ENCODE measurements at regions of chr14 and their contacts with region 1.

Region 1: GRCh38 chr14:73824116-73824515 is 27.5 kb upstream of the PTGR2 start:
- DNase-seq: no peak
- H3K4me3 ChIP-seq: no peak overlapping the region
- CTCF ChIP-seq: no peak

Region 2: DNA sequence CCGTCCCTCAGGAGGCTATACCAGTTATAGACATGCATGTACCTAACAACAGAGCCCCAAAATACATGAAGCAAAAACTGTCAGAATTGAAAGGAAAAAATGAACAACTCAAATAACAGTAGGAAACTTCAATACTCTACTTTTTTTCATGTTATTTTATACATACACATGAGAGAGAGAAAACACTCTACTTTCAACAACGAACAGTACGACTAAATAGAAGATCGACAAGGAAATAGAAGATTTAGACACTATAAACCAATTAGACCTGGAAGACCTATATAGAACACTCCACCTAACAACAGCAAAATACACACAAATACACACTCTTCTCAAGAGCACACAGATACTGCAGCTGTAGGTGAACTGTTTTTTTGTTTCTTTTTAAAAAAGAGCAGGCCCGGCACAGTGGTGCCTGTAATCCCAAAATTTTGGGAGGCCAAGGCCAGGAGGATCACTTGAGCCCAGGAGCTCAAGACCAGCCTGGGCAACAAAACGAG is 75.2 kb before region 1 on chr14:
- in situ Hi-C with region 1: no loop called
- DNase-seq: no peak
- H3K4me3 ChIP-seq: no peak overlapping the region
- CTCF ChIP-seq: no peak

Region 3: DNA sequence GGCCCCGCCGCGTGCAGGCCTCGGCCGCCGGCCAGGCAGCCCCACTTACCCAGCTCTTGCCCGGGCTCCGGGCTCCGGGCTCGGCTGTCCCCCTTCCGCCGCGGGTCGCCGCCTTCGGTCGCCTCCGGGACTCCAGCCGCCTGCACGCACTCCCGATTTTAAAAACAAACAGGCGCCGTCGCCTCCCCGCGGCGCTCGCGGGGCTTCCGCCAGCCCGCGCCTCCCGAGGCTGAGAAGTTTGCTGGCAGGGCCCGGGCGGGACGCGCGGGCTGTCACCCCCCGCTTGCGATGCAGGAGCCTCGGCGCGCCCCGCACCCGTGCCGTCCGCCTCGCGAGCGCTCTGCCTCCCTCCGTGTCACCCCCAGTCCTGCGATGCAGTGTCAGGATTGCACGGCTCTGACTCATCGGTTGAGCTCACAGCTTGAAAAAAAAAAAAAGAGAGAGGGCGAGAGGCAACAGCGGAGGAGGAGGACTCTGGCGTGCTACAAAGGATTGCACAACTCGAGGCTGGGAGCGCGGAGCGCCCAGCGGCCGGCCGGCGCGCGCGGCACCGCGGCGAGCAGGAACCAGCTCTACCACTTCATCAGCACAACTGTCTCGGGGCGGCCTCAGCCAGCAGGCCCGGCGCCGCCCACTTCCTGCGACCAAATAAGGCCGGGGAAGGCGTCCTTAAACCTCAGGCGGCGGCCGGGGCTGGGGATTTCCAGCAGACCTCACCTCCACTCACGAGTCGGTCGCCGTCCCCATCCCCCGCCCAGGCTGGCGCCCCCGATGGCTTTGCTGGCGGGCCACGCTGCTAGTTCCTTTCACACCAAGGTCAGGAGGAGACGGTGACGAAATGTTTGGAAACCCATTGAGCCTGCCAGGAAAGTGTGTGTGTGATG is 64.2 kb before region 1 on chr14:
- in situ Hi-C with region 1: loop called (anchors 5 kb)
- DNase-seq: peak; percentile 95
- H3K4me3 ChIP-seq: peak overlapping the region; percentile 70
- CTCF ChIP-seq: no peak

Region 4: DNA sequence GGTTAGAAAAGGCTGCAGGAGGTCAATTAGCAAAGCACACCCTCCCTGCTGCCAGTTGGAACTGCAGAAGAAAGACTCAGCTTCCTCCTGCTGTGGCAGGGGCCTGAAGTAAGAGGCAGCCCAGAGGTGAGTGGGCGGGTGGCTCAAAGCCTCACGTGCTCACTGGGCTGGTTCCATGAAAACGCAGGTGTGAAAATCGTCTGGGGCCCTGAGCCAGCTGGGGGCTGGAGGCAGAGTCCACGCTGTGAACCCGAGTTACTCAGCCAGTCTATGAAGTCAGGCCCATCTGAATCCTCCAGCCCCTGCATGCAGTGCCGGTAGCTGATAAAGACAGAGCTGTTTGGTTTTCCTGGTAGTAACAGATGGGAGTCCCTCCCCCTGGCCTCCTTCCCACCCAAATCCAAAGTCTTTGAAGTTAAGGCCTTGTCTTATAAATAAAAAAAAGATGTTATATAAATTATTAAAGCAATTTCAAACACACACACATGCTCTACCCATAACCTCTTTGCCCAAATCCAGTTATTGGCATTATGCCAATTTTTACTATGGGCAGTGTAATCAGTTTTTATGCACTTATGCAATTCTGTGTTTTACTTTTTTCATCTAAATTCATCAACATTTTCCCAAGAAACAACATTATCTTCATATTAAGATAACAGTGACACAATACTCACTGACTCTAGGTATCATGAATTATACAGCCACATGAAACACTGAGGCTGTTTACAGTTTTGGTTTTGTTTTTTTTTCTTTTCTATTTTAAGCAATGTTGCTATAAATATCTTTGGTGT is 52.1 kb before region 1 on chr14:
- in situ Hi-C with region 1: no loop called
- DNase-seq: no peak
- H3K4me3 ChIP-seq: no peak overlapping the region
- CTCF ChIP-seq: no peak

Region 5: DNA sequence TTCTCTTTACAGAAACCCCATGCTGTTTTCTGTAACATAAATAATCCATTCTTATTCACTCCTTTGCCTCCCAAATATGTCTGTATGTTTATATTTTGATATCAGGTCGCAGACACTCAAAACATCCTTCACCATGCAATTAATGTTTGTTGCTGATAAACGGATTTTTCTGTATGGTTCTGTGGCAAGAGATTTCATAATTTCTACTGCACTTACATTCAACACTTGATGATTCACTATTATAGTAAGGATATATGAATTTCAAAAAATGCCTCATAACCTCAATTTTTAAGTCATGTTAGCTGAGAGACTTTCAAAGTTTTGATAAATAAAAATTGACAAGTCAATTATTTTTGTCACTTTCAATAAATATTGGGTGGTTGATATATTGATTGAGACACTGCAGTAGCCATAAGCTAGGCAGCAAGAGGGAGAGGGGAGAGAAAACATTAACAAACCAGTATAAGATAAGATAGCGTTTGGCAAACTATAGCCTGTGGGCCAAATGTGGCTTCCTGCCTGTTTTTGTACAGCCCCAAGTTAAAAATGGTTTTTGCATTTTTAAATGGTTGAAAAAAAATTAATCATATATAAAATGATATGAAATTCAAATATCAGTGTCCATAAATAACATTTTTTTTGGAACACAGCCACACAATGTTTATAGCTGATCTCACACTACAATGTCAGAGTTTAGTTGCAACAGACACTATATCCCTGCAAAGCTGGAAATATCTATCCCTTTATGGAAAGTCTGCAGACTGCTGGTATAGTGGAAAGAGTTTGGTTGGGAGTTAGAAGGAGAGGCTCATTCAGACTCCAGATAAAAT is 241.8 kb after region 1 on chr14:
- in situ Hi-C with region 1: no loop called
- DNase-seq: no peak
- H3K4me3 ChIP-seq: no peak overlapping the region
- CTCF ChIP-seq: no peak

Region 6: DNA sequence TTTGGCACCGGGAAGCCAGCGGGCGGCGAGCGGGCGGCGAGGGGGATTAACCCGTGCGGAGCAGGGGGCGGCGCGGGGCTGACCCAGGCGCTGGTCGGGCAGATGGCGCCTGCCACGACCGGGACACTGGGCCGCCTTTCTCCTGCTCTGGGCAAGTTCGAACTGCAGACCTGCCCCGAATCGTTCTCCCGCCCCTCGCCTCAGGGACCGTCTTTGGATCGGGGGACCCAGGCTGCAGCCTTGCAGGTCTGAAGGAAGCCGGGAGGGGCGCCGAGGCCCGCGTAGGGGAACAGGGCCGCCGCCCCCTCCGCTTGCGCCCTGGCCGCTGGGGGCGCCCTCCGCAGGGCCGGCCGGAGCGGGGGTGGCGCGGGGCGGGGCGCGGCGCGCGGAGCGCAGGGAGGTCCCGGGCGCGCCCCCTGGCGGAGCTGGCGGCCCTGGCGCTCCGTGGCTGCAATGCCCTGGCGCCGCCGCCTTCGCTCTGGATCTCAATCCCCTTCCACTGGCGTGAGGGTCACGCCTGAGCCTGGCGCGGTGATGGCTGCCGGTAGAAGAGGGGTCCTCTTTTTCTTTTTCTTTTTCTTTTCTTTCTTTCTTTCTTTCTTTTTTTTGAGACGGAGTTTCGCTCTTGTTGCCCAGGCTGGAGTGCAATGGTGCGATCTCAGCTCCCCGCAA is 788.4 kb after region 1 on chr14:
- in situ Hi-C with region 1: no loop called
- DNase-seq: no peak
- H3K4me3 ChIP-seq: peak overlapping the region; percentile 71
- CTCF ChIP-seq: peak; percentile 62